PC-9 (cell line): ENCODE measurements at regions of chr2 and their contacts with region 1.

Region 1: DNA sequence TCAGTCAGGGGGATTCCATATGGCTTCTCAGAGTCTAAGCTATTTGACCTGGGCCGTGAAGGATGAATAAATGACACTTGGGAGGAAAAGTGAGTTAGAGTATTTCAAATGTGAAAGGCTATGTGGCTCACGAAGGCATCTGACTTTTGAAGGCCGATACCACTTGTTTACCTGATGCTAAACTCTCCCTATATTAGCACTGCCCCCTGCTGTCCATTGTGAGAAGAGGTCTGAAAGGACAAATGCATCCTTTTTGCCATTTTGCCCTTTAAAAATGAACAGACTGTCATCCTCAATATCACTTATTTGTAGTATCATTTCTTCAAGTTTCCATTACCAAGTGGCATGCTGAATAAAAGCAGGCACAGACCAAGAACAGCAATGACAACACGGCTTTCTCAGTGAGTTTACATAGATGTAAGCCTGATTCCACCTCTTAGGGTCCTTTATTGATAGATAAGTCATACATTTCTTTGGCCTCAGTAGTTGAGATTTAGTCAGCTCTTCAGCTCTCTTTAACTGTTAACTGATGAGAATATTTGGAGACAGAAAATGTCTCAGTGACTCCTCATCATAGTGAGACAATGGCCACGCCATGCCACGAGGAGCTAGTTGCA is 40.1 kb downstream of the DOCK10 start:
- DNase-seq: peak in 1 of 2 experiments; percentile 48
- H3K4me3 ChIP-seq: no peak overlapping the region
- H3K27ac ChIP-seq: no peak overlapping the region
- H3K4me1 ChIP-seq: no peaks in the 10 kb centered on the region
- H3K27me3 ChIP-seq: 0 out of 2 replicates have a peak, but pooled peaks cover 3% of the 10 kb centered on the region
- CTCF ChIP-seq: peak; percentile 93

Region 2: GRCh38 chr2:224357098-224357901 is 644.8 kb before region 1 on chr2:
- CTCF ChIA-PET with region 1: no interaction called
- POLR2A ChIA-PET with region 1: no interaction called
- intact Hi-C with region 1: loop called (anchors 1 kb)
- DNase-seq: peak; percentile 72 to 77
- H3K4me3 ChIP-seq: no peak overlapping the region
- H3K27ac ChIP-seq: no peak overlapping the region
- H3K4me1 ChIP-seq: peaks cover 16% of the 10 kb centered on the region
- H3K27me3 ChIP-seq: no peaks in the 10 kb centered on the region
- CTCF ChIP-seq: peak; percentile 100

Region 3: DNA sequence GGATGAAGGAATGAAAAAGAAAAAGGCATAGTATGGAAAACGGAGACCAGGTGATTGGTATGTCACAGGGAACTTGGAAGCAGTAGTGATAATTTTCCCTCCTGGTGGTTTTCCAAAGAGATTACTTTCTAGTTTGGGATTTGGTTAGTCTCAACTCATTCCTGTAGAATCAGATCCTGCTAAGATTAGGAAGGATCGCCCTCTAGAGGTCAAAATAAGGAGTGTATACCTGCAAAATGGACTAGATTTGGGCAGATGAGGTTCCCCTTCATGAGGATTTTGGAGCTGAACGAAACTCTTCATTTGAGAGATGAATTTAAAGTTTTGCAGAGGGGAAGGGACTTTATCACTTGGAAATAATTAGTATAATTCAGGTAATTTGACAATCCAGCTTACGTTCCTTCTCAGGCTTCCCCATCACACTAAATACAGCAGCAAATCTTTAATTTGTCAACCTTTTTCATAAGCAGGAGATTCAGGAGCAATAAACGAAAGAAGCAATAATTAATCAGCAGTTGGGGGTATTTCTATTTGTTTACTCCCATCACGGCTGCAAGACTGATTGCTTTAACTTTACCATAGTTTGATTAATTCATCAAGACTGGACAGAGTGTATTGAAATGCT is 351.2 kb before region 1 on chr2:
- CTCF ChIA-PET with region 1: interaction called, 3 read pairs
- POLR2A ChIA-PET with region 1: no interaction called
- intact Hi-C with region 1: loop called (anchors 5 kb)
- DNase-seq: peak; percentile 43 to 75
- H3K4me3 ChIP-seq: no peak overlapping the region
- H3K27ac ChIP-seq: no peak overlapping the region
- H3K4me1 ChIP-seq: peaks cover 6% of the 10 kb centered on the region
- H3K27me3 ChIP-seq: no peaks in the 10 kb centered on the region
- CTCF ChIP-seq: peak; percentile 100

Region 4: GRCh38 chr2:224778474-224778877 is 223.7 kb before region 1 on chr2:
- CTCF ChIA-PET with region 1: no interaction called
- POLR2A ChIA-PET with region 1: no interaction called
- intact Hi-C with region 1: loop called (anchors 2 kb)
- DNase-seq: peak; percentile 67 to 75
- H3K4me3 ChIP-seq: no peak overlapping the region
- H3K27ac ChIP-seq: no peak overlapping the region
- H3K4me1 ChIP-seq: peaks cover 2% of the 10 kb centered on the region
- H3K27me3 ChIP-seq: no peaks in the 10 kb centered on the region
- CTCF ChIP-seq: peak; percentile 99

Region 5: GRCh38 chr2:224816816-224817215 is 185.3 kb before region 1 on chr2:
- CTCF ChIA-PET with region 1: no interaction called
- POLR2A ChIA-PET with region 1: no interaction called
- intact Hi-C with region 1: loop called (anchors 10 kb)
- DNase-seq: peak in 1 of 2 experiments; percentile 79
- H3K4me3 ChIP-seq: no peak overlapping the region
- H3K27ac ChIP-seq: no peak overlapping the region
- H3K4me1 ChIP-seq: peaks cover 13% of the 10 kb centered on the region
- H3K27me3 ChIP-seq: no peaks in the 10 kb centered on the region
- CTCF ChIP-seq: no peak

Region 6: DNA sequence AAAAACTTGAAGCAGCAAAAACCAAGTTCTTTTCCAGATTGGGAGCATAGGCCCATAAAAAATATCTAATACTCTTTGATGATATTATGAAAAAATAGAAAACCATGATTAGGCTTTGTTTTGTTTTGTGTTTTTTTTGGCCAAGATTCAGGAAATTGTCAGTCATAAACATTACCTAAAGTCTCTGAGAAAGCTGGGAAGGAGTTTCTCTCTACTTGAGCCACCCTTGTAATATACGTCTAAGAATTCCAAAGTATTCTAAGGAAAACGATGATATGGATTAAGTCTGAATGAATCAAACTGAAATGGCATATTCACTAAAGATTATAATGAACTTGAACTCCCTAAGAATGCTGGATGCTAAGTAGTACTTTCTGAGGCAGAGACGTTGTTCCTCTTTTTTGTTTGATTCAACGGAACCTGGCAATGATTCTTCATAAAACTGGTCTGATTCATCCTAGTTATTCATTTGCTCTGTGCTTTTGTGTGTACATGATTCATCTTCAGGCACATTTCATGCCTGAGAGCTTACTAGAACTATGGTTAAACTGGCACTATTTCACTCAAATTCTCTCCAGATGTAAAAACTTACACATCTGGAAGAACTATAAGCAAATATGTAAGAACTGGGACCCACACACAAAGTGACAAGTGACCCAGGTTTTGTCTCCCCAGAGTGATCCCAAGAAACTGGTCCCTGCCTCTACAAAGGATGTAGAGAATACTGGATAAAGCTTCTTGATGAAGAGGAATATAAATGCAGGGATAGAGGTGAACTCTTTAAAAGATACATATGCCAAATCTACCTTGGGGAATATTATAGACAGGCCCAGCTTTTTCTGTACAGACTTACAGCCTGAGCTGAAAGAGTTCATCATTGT is 119.6 kb before region 1 on chr2:
- CTCF ChIA-PET with region 1: no interaction called
- POLR2A ChIA-PET with region 1: interaction called, 3 read pairs
- intact Hi-C with region 1: loop called (anchors 1 kb)
- DNase-seq: no peak
- H3K4me3 ChIP-seq: no peak overlapping the region
- H3K27ac ChIP-seq: no peak overlapping the region
- H3K4me1 ChIP-seq: no peaks in the 10 kb centered on the region
- H3K27me3 ChIP-seq: no peaks in the 10 kb centered on the region
- CTCF ChIP-seq: no peak

Region 7: GRCh38 chr2:224930990-224931389 is 71.2 kb before region 1 on chr2:
- CTCF ChIA-PET with region 1: no interaction called
- POLR2A ChIA-PET with region 1: no interaction called
- intact Hi-C with region 1: loop called (anchors 5 kb)
- DNase-seq: no peak
- H3K4me3 ChIP-seq: no peak overlapping the region
- H3K27ac ChIP-seq: no peak overlapping the region
- H3K4me1 ChIP-seq: no peaks in the 10 kb centered on the region
- H3K27me3 ChIP-seq: no peaks in the 10 kb centered on the region
- CTCF ChIP-seq: peak; percentile 39; the same call in 1 of the 2 replicates

Region 8: DNA sequence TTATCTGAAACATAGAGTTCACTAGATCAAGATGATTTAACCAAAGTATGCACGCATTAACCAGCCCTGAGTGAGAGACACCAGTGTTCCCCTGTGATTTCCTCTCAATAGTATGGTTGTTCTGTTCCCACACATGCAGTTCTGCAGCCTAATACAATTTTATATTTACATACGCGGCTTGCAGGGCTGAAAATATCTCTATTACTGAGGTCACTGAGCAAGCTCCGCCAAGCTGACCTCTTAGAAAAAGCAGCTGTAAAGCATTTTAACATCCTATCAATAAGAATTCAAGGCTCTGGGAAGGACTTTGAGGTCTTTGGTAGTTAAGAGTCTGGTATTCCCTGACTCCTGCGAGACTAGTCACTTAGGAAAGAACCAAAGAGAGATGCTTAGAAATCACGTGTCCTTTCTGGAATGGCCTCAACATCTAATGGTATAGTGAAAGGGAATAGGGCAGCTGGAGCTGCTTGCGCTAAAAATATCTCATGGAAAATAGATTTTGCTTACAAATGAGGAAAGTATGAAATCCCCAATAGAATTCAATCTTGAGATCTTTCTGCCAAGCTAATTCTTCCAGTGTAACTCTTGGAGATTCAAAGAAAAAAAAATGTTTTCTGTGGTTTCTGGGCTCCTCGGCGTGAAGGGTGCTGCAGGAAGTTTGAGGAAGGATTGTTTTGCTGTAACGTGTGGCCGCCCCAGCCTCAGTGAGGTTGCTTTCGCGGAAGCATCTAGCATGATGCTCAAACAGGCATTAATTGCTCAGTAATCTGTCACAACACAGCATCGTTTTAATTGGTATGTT is 19.0 kb before region 1 on chr2:
- CTCF ChIA-PET with region 1: no interaction called
- POLR2A ChIA-PET with region 1: no interaction called
- intact Hi-C with region 1: no loop called
- DNase-seq: no peak
- H3K4me3 ChIP-seq: no peak overlapping the region
- H3K27ac ChIP-seq: no peak overlapping the region
- H3K4me1 ChIP-seq: no peaks in the 10 kb centered on the region
- H3K27me3 ChIP-seq: no peaks in the 10 kb centered on the region
- CTCF ChIP-seq: no peak